Gastrocnemius medialis (tissue), 4 donors: ENCODE measurements at regions of chr5 and their contacts with region 1.

Region 1: DNA sequence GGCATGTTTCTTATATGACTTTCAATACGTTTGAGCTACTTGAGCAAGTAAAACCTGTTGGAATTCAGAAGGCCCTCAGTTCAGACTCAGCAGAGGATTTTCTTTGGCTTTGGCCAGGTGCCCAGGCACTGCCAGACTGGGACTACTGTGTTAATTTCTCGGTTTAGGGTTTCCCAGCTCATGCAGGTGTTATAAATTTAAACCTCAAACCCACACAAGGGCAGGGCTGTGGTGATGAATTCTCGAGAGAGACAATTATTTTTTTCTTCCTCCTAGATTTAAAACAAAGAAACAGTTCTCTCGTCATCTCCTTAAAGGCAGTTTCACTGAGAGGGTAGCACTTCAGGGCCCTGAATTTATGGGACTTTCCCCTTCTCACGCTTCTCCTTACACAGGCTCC is 406.0 kb upstream of the PIK3R1 start:
- DNase-seq: no peak
- ATAC-seq: no peak
- H3K4me3 ChIP-seq: no peak overlapping the region
- H3K27ac ChIP-seq: peak overlapping the region; percentile 91 to 95 (median 92)
- H3K4me1 ChIP-seq: peaks cover 39 to 44% of the 10 kb centered on the region in 2 donors
- H3K27me3 ChIP-seq: no peaks in the 10 kb centered on the region
- CTCF ChIP-seq: no peak
- POLR2A ChIP-seq: no peak

Region 2: DNA sequence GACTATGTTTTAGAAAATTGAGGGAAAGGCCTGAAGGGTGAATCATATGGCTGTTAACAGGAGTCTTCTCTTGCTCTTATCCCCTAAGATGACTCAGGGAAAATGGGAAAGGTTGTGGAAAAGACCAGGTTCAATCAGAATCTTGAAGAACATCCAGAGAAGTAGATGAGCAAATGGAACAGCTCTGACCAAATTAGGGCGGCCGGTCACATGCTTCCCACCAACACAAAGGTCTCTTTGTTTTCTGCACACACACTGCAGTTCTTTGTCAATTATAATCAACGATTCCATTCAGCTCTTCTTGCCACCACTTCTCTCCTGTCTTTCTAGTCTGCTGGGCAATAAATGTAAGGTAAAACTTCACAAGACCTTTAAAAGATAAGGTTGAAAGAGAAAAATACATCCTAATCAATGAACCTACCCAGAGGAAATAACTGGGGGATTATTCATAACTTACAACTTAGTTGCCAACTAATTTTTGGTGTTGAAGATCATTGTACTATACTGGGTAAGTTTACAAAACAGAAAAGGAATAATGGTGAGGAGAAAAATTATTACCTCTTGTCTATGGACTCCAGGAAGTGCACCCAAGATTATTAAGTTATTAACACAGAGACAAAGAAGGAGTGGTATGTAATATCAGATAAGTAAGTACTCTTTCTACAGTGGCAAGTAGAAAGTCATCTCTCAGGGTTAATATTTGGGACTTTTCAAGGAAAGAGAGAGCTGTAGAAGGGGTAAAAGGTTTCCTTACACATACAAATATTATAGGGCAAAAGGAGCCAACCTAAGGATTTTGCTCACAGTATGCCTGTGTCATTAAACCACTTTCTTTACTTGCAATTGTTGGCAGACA is 36.0 kb before region 1 on chr5:
- in situ Hi-C with region 1: no loop called
- intact Hi-C with region 1: loop called (anchors 2 kb)
- DNase-seq: no peak
- ATAC-seq: no peak
- H3K4me3 ChIP-seq: no peak overlapping the region
- H3K27ac ChIP-seq: peak overlapping the region; percentile 74 to 82 (median 78)
- H3K4me1 ChIP-seq: peaks cover 30 to 32% of the 10 kb centered on the region in 2 donors
- H3K27me3 ChIP-seq: no peaks in the 10 kb centered on the region
- CTCF ChIP-seq: no peak
- POLR2A ChIP-seq: no peak

Region 3: DNA sequence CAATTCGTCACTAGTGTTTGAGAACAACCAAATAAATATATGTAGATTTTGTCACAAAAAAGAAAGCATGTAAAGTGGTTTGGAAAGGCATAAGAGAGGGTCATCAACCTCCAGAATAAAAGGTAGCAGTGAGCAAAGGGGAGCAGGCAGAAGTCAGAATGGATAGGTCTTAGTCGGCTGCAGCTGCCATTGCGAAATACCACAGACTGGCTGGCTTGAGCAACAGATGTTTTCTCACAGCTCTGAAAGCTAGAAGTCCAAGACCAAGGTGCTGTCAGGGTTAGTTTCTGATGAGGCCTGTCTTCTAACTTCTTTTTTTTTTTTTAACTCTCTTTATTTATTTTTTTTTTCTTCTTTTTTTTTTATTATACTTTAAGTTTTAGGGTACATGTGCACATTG is 197.9 kb after region 1 on chr5:
- in situ Hi-C with region 1: no loop called
- intact Hi-C with region 1: no loop called
- DNase-seq: peak; percentile 26 to 79
- ATAC-seq: peak; percentile 58 to 97
- H3K4me3 ChIP-seq: no peak overlapping the region
- H3K27ac ChIP-seq: no peak overlapping the region
- H3K4me1 ChIP-seq: no peaks in the 10 kb centered on the region
- H3K27me3 ChIP-seq: no peaks in the 10 kb centered on the region
- CTCF ChIP-seq: no peak
- POLR2A ChIP-seq: no peak

Region 4: GRCh38 chr5:68041293-68041692 is 231.7 kb after region 1 on chr5:
- in situ Hi-C with region 1: no loop called
- intact Hi-C with region 1: loop called (anchors 10 kb)
- DNase-seq: no peak
- ATAC-seq: no peak
- H3K4me3 ChIP-seq: no peak overlapping the region
- H3K27ac ChIP-seq: no peak overlapping the region
- H3K4me1 ChIP-seq: no peaks in the 10 kb centered on the region
- H3K27me3 ChIP-seq: no peaks in the 10 kb centered on the region
- CTCF ChIP-seq: no peak
- POLR2A ChIP-seq: no peak

Region 5: GRCh38 chr5:68252673-68253623 is 443.4 kb after region 1 on chr5:
- in situ Hi-C with region 1: no loop called
- intact Hi-C with region 1: loop called (anchors 10 kb)
- DNase-seq: peak; percentile 36 to 61
- ATAC-seq: peak; percentile 77 to 83
- H3K4me3 ChIP-seq: peak overlapping the region in 3 of 4 donors; percentile 6 to 28 (median 19)
- H3K27ac ChIP-seq: peak overlapping the region; percentile 67 to 75 (median 74)
- H3K4me1 ChIP-seq: peaks cover 80 to 88% of the 10 kb centered on the region in 2 donors
- H3K27me3 ChIP-seq: no peaks in the 10 kb centered on the region
- CTCF ChIP-seq: peak; percentile 56 to 86 (median 73)
- POLR2A ChIP-seq: no peak